Panc1 (cell line): ENCODE measurements at regions of chr15 and their contacts with region 1.

Region 1: DNA sequence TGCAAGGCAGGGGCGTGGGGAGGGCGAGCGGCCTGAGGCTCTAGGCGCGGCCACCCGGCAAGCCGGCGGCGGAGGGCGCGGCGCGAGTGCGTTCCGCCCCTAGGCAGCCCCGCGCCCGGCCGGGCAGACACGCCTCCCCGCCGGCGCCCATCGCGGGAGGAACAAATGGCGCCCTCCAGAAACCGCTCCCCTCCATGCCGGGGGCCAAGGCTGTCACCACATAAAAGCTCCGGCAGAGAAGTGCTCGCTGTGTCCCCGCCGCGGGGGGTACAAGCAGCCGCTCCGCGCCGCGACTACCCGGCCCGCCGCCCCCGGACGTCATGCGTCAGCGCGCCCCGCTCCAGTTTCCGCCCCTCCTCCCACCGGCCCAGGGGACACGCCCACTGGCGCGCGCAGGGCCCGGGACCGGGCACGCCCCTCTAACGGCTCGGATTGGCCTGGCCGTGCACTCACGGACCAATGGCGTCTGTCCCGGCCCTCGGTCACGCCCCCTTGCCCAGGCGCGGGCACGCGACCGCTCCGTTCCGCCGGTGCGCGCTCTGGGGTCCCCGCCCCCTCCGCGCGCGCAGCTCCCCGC is 391 bp upstream of the KLF13 start:
- DNase-seq: peak; percentile 80
- ATAC-seq: peak; percentile 91
- H3K4me3 ChIP-seq: peak overlapping the region; percentile 58 to 79
- H3K27ac ChIP-seq: peak overlapping the region; percentile 52; the same call in 1 of the 2 replicates
- H3K4me1 ChIP-seq: peaks cover 17% of the 10 kb centered on the region
- H3K27me3 ChIP-seq: no peaks in the 10 kb centered on the region
- CTCF ChIP-seq: no peak

Region 2: GRCh38 chr15:31215490-31216214 is 110.6 kb before region 1 on chr15:
- CTCF ChIA-PET with region 1: no interaction called
- POLR2A ChIA-PET with region 1: no interaction called
- in situ Hi-C with region 1: no loop called
- intact Hi-C with region 1: loop called (anchors 10 kb)
- DNase-seq: no peak
- ATAC-seq: peak; percentile 93
- H3K4me3 ChIP-seq: peak overlapping the region; percentile 49 to 55
- H3K27ac ChIP-seq: peak overlapping the region; percentile 60
- H3K4me1 ChIP-seq: peaks cover 26% of the 10 kb centered on the region
- H3K27me3 ChIP-seq: no peaks in the 10 kb centered on the region
- CTCF ChIP-seq: peak; percentile 95

Region 3: GRCh38 chr15:31245756-31246155 is 80.5 kb before region 1 on chr15:
- CTCF ChIA-PET with region 1: interaction called, 12 read pairs
- POLR2A ChIA-PET with region 1: no interaction called
- in situ Hi-C with region 1: no loop called
- intact Hi-C with region 1: no loop called
- DNase-seq: no peak
- ATAC-seq: no peak
- H3K4me3 ChIP-seq: no peak overlapping the region
- H3K27ac ChIP-seq: no peak overlapping the region; the same call in 1 of the 2 replicates
- H3K4me1 ChIP-seq: 0 out of 2 replicates have a peak, but pooled peaks cover under 1% of the 10 kb centered on the region
- H3K27me3 ChIP-seq: no peaks in the 10 kb centered on the region
- CTCF ChIP-seq: no peak

Region 4: DNA sequence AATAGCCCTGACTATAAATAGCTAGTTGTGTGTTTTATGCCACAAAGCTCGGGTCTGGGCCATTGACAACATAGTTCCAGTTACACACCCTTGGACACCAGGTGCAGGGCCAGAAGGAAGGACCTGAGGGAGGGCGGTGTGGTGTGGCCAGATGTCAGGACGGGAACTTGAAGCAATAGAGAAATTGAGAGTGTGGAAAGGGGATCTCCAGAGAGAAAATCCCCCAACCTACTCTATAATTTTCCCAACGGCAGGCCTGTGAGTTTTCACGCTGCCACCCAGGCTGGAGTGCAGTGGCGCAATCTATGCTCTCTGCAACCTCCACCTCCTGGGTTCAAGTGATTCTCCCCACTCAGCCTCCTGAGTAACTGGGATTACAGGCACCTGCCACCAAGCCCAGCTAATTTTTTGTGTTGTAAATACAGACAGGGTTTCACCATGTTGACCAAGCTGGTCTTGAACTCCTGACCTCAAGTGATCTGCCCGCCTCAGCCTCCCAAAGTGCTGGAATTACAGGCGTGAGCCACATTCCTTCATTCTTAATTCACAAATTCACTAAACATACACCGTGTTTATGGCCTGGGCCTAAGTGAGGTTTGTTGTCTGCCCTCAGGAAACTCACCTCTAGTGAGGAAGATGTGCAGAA is 70.4 kb before region 1 on chr15:
- CTCF ChIA-PET with region 1: no interaction called
- POLR2A ChIA-PET with region 1: no interaction called
- in situ Hi-C with region 1: no loop called
- intact Hi-C with region 1: no loop called
- DNase-seq: no peak
- ATAC-seq: no peak
- H3K4me3 ChIP-seq: no peak overlapping the region
- H3K27ac ChIP-seq: peak overlapping the region; percentile 52
- H3K4me1 ChIP-seq: peaks cover 20% of the 10 kb centered on the region; the same call in 1 of the 2 replicates
- H3K27me3 ChIP-seq: no peaks in the 10 kb centered on the region
- CTCF ChIP-seq: no peak